H1 (cell line): ENCODE measurements at regions of chr19 and their contacts with region 1.

Region 1: GRCh38 chr19:11924886-11925650 is at the start of gene ZNF700:
- DNase-seq: peak; percentile 56 to 95
- H3K4me3 ChIP-seq: peak within 1 kb of the TSS; percentile 65 to 82 (median 76)
- H3K27ac ChIP-seq: peak within 1 kb of the TSS; percentile 95
- H3K4me1 ChIP-seq: peaks cover 0 to 3% (median 3%) of the 10 kb centered on the region in 4 experiments; a peak in 4 of 7 replicates
- H3K27me3 ChIP-seq: 0 out of 7 replicates have a peak, but pooled peaks cover 0 to 3% (median 0%) of the 10 kb centered on the region in 4 experiments
- CTCF ChIP-seq: no peak
- EP300 ChIP-seq: 0 out of 3 replicates have a peak, but pooled peaks of 1 of the 2 experiments have one; percentile 17
- POLR2A ChIP-seq: peak; percentile 91 to 98
- RAD21 ChIP-seq: no peak
- total RNA-seq, gene ZNF700: 9.4 and 10.5 TPM in 2 replicates

Region 2: GRCh38 chr19:11887611-11888531 is 37.2 kb before region 1 on chr19 and contains the start of gene ZNF69:
- CTCF ChIA-PET with region 1: interaction called, 69 read pairs
- POLR2A ChIA-PET with region 1: interaction called, 8 read pairs
- DNase-seq: peak; percentile 75 to 89
- H3K4me3 ChIP-seq: peak within 1 kb of the TSS; percentile 79 to 85 (median 84)
- H3K27ac ChIP-seq: peak within 1 kb of the TSS; percentile 81
- H3K4me1 ChIP-seq: peaks cover 4 to 15% (median 6%) of the 10 kb centered on the region in 4 experiments
- H3K27me3 ChIP-seq: no peaks in the 10 kb centered on the region
- CTCF ChIP-seq: peak in 1 of 3 experiments; percentile 6; a peak in 1 of 4 replicates
- EP300 ChIP-seq: no peak
- POLR2A ChIP-seq: peak; percentile 65 to 86
- RAD21 ChIP-seq: no peak
- total RNA-seq, gene ZNF69: 21.2 and 22.8 TPM in 2 replicates

Region 3: DNA sequence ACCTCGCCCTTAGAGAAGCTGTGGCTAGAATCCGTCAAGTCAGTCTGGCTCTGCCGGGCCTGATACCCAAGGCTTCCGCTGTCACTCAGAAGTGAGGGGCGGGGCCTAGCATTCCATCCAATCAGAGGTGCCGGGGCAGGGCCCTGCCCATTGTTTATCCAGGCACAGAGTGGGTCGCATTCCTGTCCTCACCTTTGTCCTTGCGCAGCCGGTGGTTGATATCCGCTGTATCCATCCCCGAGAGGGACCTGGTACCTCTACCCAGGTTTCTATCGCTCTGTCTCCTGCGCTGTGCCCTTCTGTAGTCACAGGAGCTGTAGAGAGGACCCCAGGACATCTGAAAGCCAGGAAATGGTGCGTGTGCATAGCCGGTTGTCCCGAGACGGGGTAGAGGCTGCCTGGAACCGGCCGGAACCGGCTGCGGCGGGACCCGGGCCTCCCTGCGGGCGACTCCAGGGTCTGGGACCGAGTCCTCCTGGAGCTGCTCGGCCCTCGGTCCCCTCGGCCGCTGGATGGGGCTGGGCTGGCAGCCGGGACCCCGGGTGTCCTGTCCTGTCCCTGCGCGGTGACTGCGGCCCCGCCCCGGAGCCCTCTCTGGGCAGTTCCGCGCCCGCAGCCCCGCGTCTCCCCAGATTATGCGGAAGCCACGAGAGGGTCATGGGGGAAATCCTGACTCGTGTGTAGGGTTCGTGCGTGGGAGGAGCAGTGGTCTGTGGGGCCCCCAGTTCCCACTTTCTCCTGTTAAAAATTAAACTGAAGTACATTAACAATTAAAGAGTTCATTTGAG is 40.0 kb after region 1 on chr19 and contains the start of gene ZNF763:
- CTCF ChIA-PET with region 1: interaction called, 23 read pairs
- POLR2A ChIA-PET with region 1: interaction called, 9 read pairs
- DNase-seq: peak; percentile 89 to 96
- H3K4me3 ChIP-seq: peak within 1 kb of the TSS; percentile 66 to 76 (median 72)
- H3K27ac ChIP-seq: peak within 1 kb of the TSS; percentile 75; the same call in 1 of the 2 replicates
- H3K4me1 ChIP-seq: peaks cover 0 to 7% (median 4%) of the 10 kb centered on the region in 4 experiments; a peak in 5 of 7 replicates
- H3K27me3 ChIP-seq: peaks cover 0 to 13% (median 7%) of the 10 kb centered on the region in 4 experiments; a peak in 5 of 7 replicates
- CTCF ChIP-seq: no peak
- EP300 ChIP-seq: no peak
- POLR2A ChIP-seq: peak; percentile 71 to 91
- RAD21 ChIP-seq: no peak; a peak in 2 of 4 replicates
- total RNA-seq, gene ZNF763: 1.7 TPM in 2 replicates